Mammary epithelial cell (primary cell): ENCODE measurements at regions of chr17 and their contacts with region 1.

Region 1: DNA sequence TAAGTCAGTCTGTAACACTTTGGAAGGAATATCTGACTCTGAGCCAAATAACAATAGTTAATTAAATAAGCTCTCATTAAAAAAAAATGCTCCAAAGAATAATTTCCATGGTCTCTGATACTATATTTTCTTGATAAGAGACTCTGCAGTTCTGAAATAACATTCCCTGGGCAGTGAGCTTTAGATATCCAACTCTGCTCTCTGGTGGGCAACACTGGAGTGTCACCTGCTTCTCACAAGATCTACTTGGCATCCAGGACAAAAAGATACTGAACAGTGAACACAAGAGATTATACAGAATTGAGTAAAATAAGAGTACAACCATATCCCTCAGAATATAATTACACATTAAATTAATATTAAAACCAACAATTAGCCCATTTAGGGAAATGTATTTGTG is 13.7 kb downstream of the BLMH start:
- DNase-seq: no peak
- H3K4me3 ChIP-seq: no peak overlapping the region
- H3K27ac ChIP-seq: no peak overlapping the region
- H3K4me1 ChIP-seq: no peaks in the 10 kb centered on the region
- H3K27me3 ChIP-seq: peaks cover 43% of the 10 kb centered on the region
- CTCF ChIP-seq: peak; percentile 15 to 16

Region 2: DNA sequence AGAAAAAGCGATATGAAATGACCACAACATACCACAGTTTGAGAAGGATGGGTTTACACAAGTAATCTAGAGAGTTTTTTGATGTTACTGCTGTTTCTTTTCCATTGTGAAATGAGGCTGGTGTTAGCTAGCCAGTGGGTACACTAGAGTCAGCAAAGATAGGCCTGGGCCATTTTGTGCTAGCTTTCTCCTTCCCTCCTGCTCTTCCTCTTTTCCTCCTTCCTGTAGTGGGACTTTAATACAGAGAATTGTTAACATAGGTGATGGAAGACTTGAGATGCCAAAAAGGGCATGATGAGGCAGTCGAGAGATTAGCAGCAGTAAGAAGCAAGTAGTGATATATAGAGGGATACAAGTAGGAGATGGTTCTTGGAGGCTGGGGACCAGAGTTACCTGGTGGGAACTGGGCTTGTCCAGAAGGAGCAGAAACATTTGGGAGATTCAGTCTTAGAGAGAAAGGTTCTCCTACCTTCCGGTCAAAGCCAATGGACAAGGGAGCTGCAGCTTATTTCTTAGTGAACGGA is 153.7 kb before region 1 on chr17:
- CTCF ChIA-PET with region 1: no interaction called
- dilution Hi-C with region 1: no loop called
- in situ Hi-C with region 1: no loop called
- intact Hi-C with region 1: loop called (anchors 1 kb)
- DNase-seq: no peak
- H3K4me3 ChIP-seq: no peak overlapping the region
- H3K27ac ChIP-seq: no peak overlapping the region
- H3K4me1 ChIP-seq: no peaks in the 10 kb centered on the region
- H3K27me3 ChIP-seq: no peaks in the 10 kb centered on the region
- CTCF ChIP-seq: no peak

Region 3: DNA sequence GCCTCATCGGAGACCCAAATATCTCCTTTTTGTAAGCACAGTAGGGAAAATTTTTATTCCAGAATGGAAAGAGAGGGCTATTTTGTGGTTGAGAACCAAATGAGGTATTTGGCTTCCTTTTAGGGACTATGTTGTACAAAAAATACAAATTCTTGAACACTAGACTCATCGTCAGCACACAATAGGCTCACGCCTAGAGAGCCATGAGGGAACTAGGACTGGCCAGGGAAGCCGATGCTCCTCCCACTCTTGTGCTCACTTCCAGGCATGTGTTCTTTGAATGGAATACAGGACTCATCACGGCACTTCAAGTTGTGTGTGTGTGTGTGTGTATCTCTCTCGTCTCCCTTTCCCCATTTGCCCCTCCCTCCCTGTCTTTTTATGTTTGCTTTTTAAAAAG is 31.6 kb after region 1 on chr17:
- CTCF ChIA-PET with region 1: no interaction called
- dilution Hi-C with region 1: no loop called
- in situ Hi-C with region 1: no loop called
- intact Hi-C with region 1: no loop called
- DNase-seq: no peak
- H3K4me3 ChIP-seq: no peak overlapping the region
- H3K27ac ChIP-seq: no peak overlapping the region
- H3K4me1 ChIP-seq: no peaks in the 10 kb centered on the region
- H3K27me3 ChIP-seq: peaks cover 27% of the 10 kb centered on the region
- CTCF ChIP-seq: no peak